Activated CD8-positive, alpha-beta T cell treated with anti-CD3 and anti-CD28 coated beads, Interleukin-2, amount 10 ng/mL, durations not matched to agents 7 days and 5 days (primary cell): ENCODE measurements at regions of chr14 and their contacts with region 1.

Region 1: DNA sequence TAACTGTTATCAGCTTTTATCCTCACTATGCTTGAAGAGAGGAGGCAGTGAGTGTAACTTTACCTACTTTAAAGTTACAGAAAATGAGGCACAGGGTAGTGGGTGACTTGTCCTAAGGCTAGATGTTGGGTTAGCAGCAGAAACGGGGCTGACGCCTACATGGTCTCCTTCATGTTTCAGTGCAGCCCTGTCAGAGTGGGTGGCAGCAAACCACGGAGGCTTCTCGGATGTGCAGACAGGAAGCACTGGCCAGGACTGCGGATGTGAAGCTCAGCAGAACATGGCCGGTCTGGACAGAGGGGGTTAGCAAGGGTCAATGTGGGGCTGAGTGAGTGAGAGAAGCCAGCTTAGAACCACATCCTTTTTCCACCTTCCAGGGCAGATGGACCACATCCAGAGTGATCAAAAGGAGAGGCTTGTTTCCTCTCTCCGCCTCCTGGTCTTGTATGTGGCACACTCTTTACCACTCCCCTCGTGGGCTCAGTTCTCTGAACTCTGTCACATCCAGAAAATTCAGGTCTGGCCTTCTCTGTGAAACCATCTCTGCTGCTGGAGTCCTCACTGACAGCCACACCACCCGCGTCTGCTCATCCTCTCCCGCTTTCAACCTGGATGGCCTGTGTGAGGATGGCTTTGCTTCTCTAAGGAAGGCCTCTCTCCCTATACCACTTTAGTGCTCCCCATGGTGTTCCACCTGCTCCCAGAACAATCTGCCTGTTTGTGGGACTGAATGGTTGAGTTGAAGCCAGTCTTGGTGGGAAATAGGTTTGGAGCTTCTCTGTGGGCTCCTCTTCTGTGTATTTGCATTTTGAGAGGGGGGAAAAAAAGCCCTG is 14.1 kb downstream of the SUSD6 start:
- DNase-seq: peak; percentile 92
- ATAC-seq: peak; percentile 93
- H3K4me3 Mint-ChIP-seq: peak overlapping the region; percentile 56
- H3K27ac Mint-ChIP-seq: peak overlapping the region; percentile 95
- H3K4me1 Mint-ChIP-seq: peaks cover 95% of the 10 kb centered on the region
- H3K27me3 Mint-ChIP-seq: no peaks in the 10 kb centered on the region

Region 2: DNA sequence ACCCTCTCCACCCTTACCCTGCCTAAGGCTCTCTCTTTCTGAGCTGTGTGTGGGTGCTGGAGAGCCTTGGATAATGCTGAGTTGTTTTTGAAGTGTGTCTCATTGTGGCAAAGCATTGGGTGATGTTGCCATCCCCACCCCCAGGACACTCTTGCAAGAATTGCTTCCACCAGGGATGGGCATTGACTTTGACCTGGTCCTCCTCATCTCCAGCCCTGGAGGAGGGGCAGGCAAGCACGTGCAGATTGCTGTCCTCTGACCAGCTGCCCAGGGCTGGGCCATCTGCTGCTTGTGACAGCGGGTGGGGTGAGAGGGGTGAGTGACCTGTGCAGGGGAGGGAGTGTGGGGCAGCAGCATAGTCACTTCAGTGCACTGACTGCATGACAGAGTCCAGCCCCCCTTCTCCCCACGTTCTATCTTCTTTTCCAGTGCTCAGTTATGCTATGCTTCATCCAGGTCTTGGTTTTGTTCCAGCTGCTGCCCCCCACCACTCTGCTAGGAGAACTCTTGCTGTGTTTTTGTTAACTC is 12.1 kb after region 1 on chr14:
- CTCF ChIA-PET with region 1: interaction called, 11 read pairs
- POLR2A ChIA-PET with region 1: interaction called, 7 read pairs
- DNase-seq: no peak
- ATAC-seq: peak; percentile 21
- H3K4me3 Mint-ChIP-seq: peak overlapping the region; percentile 43
- H3K27ac Mint-ChIP-seq: peak overlapping the region; percentile 80
- H3K4me1 Mint-ChIP-seq: peaks cover 79% of the 10 kb centered on the region
- H3K27me3 Mint-ChIP-seq: no peaks in the 10 kb centered on the region

Region 3: GRCh38 chr14:69648477-69649451 is 23.2 kb after region 1 on chr14:
- CTCF ChIA-PET with region 1: interaction called, 21 read pairs
- POLR2A ChIA-PET with region 1: interaction called, 5 read pairs
- DNase-seq: no peak
- ATAC-seq: no peak
- H3K4me3 Mint-ChIP-seq: no peak overlapping the region
- H3K27ac Mint-ChIP-seq: no peak overlapping the region
- H3K4me1 Mint-ChIP-seq: peaks cover 68% of the 10 kb centered on the region
- H3K27me3 Mint-ChIP-seq: no peaks in the 10 kb centered on the region

Region 4: DNA sequence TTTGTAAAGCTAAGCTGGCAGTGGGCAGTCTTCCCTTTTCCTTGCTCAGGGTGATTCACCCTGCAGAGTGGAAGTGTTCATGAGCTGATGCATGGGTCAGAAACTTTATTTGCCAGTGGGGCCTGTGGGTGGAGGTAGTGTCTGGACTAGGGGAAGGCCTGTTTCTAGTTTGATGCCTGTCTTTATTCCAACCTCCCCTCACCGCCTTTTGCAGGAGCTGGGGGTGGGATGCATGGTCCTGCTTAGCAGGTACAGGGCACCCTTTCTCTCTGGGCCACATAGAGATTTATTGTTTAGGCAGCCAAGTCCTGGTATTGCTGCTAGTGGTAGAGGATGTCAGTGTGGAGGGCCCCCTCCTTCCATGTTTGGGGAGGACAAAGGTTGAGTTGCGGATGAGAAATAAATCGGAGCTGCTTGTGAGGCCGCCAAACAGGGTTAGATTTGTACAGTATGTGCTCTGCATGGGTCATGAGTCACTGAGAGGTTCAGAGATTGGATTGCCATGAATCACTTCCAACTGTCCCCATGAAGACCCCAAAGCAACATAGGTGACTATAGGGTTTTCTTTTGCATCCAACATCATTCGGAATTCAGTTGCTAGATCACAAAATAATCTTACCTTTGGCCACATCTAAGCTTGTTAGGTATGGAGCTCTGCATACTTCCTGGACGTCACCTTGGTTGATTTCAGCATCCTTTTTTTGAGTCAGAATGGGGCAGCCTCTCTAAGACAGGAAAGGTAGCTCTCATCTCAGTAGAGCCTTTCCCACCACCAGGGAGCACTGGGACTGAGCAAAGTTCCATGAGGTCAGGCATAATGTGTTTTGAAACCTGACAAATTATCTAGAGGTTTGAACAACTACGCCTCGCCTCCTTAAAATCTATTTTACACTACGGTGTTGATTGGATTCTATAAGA is 262.5 kb after region 1 on chr14:
- CTCF ChIA-PET with region 1: no interaction called
- POLR2A ChIA-PET with region 1: no interaction called
- DNase-seq: no peak
- ATAC-seq: no peak
- H3K4me3 Mint-ChIP-seq: no peak overlapping the region
- H3K27ac Mint-ChIP-seq: no peak overlapping the region
- H3K4me1 Mint-ChIP-seq: no peaks in the 10 kb centered on the region
- H3K27me3 Mint-ChIP-seq: peaks cover 25% of the 10 kb centered on the region